CD8-positive, alpha-beta T cell (primary cell): ENCODE measurements at regions of chr1 and their contacts with region 1.

Region 1: DNA sequence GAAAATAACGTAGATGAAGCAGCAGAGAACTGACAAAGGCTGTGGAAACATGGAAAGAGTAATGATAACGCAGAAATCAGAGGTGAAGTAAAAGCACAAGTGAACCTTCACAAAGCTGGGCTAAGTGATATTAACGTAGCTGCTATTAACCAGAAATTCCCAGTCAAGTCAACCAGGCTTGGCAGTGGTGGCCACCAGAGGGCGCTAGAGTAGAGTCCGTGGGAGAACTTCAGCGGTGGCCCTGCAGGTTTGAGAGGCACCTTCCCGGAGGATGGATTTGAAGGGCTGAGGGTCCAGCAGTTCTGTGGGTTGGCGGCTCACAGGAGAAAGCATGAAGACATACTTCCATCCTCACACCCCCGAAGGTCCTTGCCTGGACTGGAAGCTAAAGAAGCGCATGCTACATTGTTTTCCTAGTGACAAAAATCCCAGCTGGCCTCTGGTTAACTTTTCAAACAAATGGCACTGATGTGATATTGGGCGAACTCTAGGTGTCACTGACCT is 81.7 kb upstream of the ZNF648 start:
- DNase-seq: peak; percentile 75 to 95 (median 85)
- ATAC-seq: peak; percentile 59
- H3K4me3 ChIP-seq: no peak overlapping the region
- H3K4me3 Mint-ChIP-seq: no peak overlapping the region
- H3K27ac ChIP-seq: no peak overlapping the region
- H3K27ac Mint-ChIP-seq: no peak overlapping the region
- H3K4me1 ChIP-seq: no peaks in the 10 kb centered on the region
- H3K4me1 Mint-ChIP-seq: peaks cover 4% of the 10 kb centered on the region
- H3K27me3 ChIP-seq: no peaks in the 10 kb centered on the region
- H3K27me3 Mint-ChIP-seq: peaks cover 7% of the 10 kb centered on the region
- CTCF ChIP-seq: peak; percentile 78

Region 2: GRCh38 chr1:181863736-181864135 is 279.5 kb before region 1 on chr1:
- CTCF ChIA-PET with region 1: no interaction called
- POLR2A ChIA-PET with region 1: no interaction called
- intact Hi-C with region 1: no loop called
- DNase-seq: no peak
- ATAC-seq: no peak
- H3K4me3 ChIP-seq: no peak overlapping the region
- H3K4me3 Mint-ChIP-seq: no peak overlapping the region
- H3K27ac ChIP-seq: no peak overlapping the region
- H3K27ac Mint-ChIP-seq: no peak overlapping the region
- H3K4me1 ChIP-seq: no peaks in the 10 kb centered on the region
- H3K4me1 Mint-ChIP-seq: no peaks in the 10 kb centered on the region
- H3K27me3 ChIP-seq: no peaks in the 10 kb centered on the region
- H3K27me3 Mint-ChIP-seq: peaks cover 11% of the 10 kb centered on the region
- CTCF ChIP-seq: no peak

Region 3: GRCh38 chr1:182084487-182085316 is 58.5 kb before region 1 on chr1:
- CTCF ChIA-PET with region 1: interaction called, 97 read pairs
- POLR2A ChIA-PET with region 1: no interaction called
- intact Hi-C with region 1: loop called (anchors 1 to 5 kb)
- DNase-seq: peak; percentile 55 to 83 (median 71)
- ATAC-seq: peak; percentile 84
- H3K4me3 ChIP-seq: no peak overlapping the region
- H3K4me3 Mint-ChIP-seq: no peak overlapping the region
- H3K27ac ChIP-seq: no peak overlapping the region
- H3K27ac Mint-ChIP-seq: peak overlapping the region; percentile 37
- H3K4me1 ChIP-seq: peaks cover 28% of the 10 kb centered on the region
- H3K4me1 Mint-ChIP-seq: peaks cover 35% of the 10 kb centered on the region
- H3K27me3 ChIP-seq: no peaks in the 10 kb centered on the region
- H3K27me3 Mint-ChIP-seq: no peaks in the 10 kb centered on the region
- CTCF ChIP-seq: peak; percentile 74

Region 4: DNA sequence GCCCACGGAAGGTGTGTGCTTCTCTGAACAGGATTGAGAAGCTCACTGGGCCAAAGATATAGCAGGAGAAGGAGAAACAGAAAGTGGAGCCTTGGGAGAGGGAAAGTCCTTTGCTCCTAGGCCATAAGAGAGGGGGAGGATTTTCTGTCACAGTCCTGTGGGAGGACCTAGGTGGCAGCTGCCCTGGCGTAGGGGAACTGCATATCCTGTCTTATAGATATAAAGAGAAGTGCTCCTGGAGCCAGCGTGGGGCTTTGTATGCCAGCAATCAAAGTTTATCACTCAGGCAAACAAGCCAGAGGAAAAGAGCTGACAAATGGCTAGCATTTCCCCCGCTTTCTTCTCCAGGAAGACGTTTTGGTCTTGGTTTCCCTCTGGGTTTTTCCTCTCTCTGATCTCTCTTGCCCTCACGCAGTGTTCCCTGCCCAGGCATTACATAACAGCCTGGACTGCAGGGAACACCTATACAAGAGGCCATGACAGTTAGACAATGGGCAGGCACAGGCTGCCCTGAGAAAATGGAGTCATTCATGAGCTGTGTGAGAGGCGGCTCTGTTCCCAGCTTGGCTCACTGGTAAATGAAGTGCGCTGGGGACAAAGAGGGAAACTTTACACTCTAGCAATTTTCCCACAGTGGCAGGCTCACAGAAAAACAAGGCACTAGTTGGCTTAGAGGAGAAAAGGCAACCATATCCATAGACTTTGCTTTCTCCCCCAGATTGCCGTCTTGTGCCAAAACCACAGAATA is 29.2 kb before region 1 on chr1:
- CTCF ChIA-PET with region 1: interaction called, 11 read pairs
- POLR2A ChIA-PET with region 1: no interaction called
- intact Hi-C with region 1: no loop called
- DNase-seq: no peak
- ATAC-seq: no peak
- H3K4me3 ChIP-seq: no peak overlapping the region
- H3K4me3 Mint-ChIP-seq: no peak overlapping the region
- H3K27ac ChIP-seq: no peak overlapping the region
- H3K27ac Mint-ChIP-seq: no peak overlapping the region
- H3K4me1 ChIP-seq: no peaks in the 10 kb centered on the region
- H3K4me1 Mint-ChIP-seq: peaks cover 4% of the 10 kb centered on the region
- H3K27me3 ChIP-seq: no peaks in the 10 kb centered on the region
- H3K27me3 Mint-ChIP-seq: peaks cover 14% of the 10 kb centered on the region
- CTCF ChIP-seq: no peak

Region 5: DNA sequence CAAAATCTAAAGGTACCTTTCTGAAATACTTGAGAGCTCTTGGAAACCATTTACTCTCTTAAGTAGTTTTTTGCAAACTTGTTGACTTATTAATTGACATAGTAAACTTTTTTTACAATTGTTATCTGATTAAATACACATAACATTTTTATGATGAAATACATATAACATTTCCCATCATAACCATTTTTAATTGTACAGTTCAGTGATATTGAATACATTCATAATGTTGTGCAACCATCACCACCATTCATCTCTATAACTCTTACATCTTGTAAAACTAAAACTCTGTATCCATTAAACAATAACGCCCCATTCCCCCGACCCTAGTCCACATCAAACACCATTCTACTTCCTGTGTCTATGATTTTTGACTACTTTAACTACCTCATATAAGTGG is 14.0 kb after region 1 on chr1:
- CTCF ChIA-PET with region 1: interaction called, 25 read pairs
- POLR2A ChIA-PET with region 1: no interaction called
- intact Hi-C with region 1: no loop called
- DNase-seq: no peak
- ATAC-seq: no peak
- H3K4me3 ChIP-seq: no peak overlapping the region
- H3K4me3 Mint-ChIP-seq: no peak overlapping the region
- H3K27ac ChIP-seq: no peak overlapping the region
- H3K27ac Mint-ChIP-seq: no peak overlapping the region
- H3K4me1 ChIP-seq: no peaks in the 10 kb centered on the region
- H3K4me1 Mint-ChIP-seq: no peaks in the 10 kb centered on the region
- H3K27me3 ChIP-seq: no peaks in the 10 kb centered on the region
- H3K27me3 Mint-ChIP-seq: no peaks in the 10 kb centered on the region
- CTCF ChIP-seq: no peak

Region 6: GRCh38 chr1:182198049-182198501 is 54.9 kb after region 1 on chr1:
- CTCF ChIA-PET with region 1: interaction called, 12 read pairs
- POLR2A ChIA-PET with region 1: no interaction called
- intact Hi-C with region 1: no loop called
- DNase-seq: no peak
- ATAC-seq: no peak
- H3K4me3 ChIP-seq: no peak overlapping the region
- H3K4me3 Mint-ChIP-seq: no peak overlapping the region
- H3K27ac ChIP-seq: no peak overlapping the region
- H3K27ac Mint-ChIP-seq: no peak overlapping the region
- H3K4me1 ChIP-seq: no peaks in the 10 kb centered on the region
- H3K4me1 Mint-ChIP-seq: no peaks in the 10 kb centered on the region
- H3K27me3 ChIP-seq: no peaks in the 10 kb centered on the region
- H3K27me3 Mint-ChIP-seq: no peaks in the 10 kb centered on the region
- CTCF ChIP-seq: no peak

Region 7: DNA sequence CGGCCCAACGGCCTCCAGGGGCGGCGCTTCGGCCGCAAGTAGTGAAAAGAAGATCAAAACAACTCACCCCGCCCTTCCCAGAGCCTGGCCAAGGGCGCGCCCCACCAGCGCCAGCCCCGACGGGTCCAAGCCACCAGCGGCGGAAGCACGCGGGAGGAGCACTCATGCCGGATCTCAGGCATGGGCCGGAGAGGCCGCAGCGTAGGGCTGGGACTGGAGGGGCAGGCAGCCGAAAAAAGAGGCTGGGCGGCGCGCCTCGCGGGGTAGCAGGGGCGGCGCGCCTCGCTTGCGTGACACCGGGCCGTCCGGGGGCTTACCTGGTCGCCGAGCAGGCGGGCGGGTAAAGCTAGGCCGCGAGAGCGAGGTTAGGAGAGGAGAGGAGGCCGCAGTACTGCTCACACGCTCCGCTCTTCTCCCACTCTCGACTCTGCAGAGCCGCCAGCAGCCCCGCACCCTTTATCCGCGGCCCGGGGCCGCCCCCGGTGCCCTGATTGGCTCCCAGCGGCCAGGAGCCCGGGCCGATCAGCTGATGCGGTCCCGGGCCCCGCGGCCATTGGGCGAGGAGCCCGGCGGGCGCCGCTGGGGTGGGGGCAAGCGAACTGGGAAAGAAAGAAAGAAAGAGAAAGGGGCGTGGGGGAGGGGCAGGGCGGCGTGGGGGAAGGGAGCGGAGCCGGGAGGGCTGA is 248.3 kb after region 1 on chr1 and contains the start of gene GLUL:
- CTCF ChIA-PET with region 1: interaction called, 420 read pairs
- POLR2A ChIA-PET with region 1: interaction called, 22 read pairs
- intact Hi-C with region 1: loop called (anchors 1 kb)
- DNase-seq: peak; percentile 24 to 80 (median 55)
- ATAC-seq: peak; percentile 64
- H3K4me3 ChIP-seq: peak within 1 kb of the TSS; percentile 62 to 76
- H3K4me3 Mint-ChIP-seq: peak within 1 kb of the TSS; percentile 92
- H3K27ac ChIP-seq: peak within 1 kb of the TSS; percentile 32 to 36
- H3K27ac Mint-ChIP-seq: peak within 1 kb of the TSS; percentile 80
- H3K4me1 ChIP-seq: peaks cover 13% of the 10 kb centered on the region
- H3K4me1 Mint-ChIP-seq: peaks cover 25% of the 10 kb centered on the region
- H3K27me3 ChIP-seq: peaks cover 0 to 2% of the 10 kb centered on the region in 2 experiments
- H3K27me3 Mint-ChIP-seq: peaks cover 19% of the 10 kb centered on the region
- CTCF ChIP-seq: no peak
- total RNA-seq, gene GLUL: 27.3 to 29.7 TPM

Region 8: GRCh38 chr1:182408435-182409075 is 265.3 kb after region 1 on chr1:
- CTCF ChIA-PET with region 1: interaction called, 11 read pairs
- POLR2A ChIA-PET with region 1: interaction called, 3 read pairs
- intact Hi-C with region 1: no loop called
- DNase-seq: no peak
- ATAC-seq: no peak
- H3K4me3 ChIP-seq: no peak overlapping the region
- H3K4me3 Mint-ChIP-seq: no peak overlapping the region
- H3K27ac ChIP-seq: no peak overlapping the region
- H3K27ac Mint-ChIP-seq: no peak overlapping the region
- H3K4me1 ChIP-seq: no peaks in the 10 kb centered on the region
- H3K4me1 Mint-ChIP-seq: no peaks in the 10 kb centered on the region
- H3K27me3 ChIP-seq: no peaks in the 10 kb centered on the region
- H3K27me3 Mint-ChIP-seq: peaks cover 34% of the 10 kb centered on the region
- CTCF ChIP-seq: no peak